PC-9 (cell line): ENCODE measurements at regions of chr18 and their contacts with region 1.

Region 1: DNA sequence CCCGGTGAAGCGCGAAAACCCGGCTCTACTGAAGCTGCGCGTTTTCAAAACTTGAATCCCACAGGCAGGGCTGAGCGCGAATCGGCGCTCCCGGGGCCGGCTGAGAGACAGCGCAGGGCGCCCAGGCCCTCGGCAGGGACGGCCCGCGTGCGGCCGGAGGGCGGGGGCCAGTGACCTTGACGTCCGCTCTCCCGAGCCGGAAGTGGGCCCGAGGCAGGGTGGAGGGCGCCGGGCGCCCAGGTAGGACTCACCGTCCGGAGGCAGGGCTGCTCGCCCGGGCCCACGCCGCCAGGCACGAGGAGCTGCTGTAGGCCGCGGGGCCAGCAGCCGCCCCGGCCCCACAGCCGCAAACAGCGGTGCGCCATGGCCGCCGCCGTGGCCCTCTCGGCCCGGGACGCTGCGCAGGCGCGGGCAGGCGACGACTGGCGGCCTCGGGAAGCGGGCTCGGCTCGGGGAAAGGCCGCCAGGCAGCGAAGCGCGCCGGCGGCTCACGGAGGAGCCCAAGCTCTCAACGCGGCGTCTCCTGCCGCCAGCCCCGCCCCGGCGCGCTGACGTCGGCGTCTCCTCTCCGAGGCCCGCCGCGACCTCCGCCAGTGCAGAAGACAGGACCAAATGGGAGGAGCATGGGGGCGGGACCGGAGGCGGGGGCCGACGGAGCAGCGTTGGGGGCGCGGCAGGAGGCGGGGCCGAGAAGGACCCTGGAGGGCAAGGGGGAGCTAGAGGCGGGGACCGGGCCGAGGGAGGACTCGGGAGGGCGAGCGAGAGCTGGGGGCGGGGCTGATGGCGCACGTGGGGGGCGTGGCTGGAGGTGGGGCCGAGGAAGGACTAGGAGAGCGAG is at the start of gene AFG3L2:
- DNase-seq: peak; percentile 92 to 100
- H3K4me3 ChIP-seq: peak within 1 kb of the TSS; percentile 86
- H3K27ac ChIP-seq: peak within 1 kb of the TSS; percentile 87
- H3K4me1 ChIP-seq: peaks cover 33% of the 10 kb centered on the region
- H3K27me3 ChIP-seq: no peaks in the 10 kb centered on the region
- CTCF ChIP-seq: no peak
- total RNA-seq, gene AFG3L2: 69.4 and 71.1 TPM in 2 replicates

Region 2: GRCh38 chr18:11947214-11948191 is 429.4 kb before region 1 on chr18:
- CTCF ChIA-PET with region 1: no interaction called
- POLR2A ChIA-PET with region 1: no interaction called
- intact Hi-C with region 1: loop called (anchors 1 kb)
- DNase-seq: peak; percentile 96 to 97
- H3K4me3 ChIP-seq: peak overlapping the region; percentile 88
- H3K27ac ChIP-seq: peak overlapping the region; percentile 99
- H3K4me1 ChIP-seq: peaks cover 34% of the 10 kb centered on the region
- H3K27me3 ChIP-seq: no peaks in the 10 kb centered on the region
- CTCF ChIP-seq: no peak

Region 3: DNA sequence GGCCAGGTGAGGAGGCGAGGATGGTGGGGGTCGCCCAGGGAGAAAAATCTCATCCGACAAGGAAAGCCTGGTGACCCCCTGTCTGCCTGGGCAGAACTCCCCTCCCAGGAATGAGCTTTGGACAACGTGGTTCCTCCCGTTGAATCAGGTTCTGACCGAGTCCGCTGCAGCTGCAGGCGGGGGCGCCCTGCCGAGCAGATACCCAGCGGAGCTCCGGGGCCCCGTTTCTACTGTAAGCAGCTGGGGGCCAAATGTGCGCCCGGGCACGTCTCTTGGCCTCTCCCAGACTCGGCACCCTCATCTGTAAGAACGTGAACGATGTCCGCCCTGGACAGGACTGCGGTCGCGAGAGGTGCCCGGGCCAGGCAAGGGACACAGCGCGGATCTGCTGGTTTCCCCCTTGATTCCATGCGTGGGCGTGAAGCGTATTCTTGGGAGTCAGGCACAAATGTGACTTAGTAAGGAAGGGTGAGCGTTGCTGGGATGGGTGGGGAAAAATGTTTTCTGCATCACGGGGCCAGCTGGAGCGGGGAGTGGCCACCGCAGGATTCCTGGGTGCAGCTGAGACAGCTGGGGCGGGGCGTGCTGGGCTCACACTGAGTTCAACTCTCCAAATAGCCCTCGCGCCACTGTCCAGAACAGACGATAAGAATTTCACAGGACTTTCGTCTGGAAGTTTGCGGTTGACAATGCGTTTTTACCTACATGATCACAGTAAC is 89.1 kb before region 1 on chr18:
- CTCF ChIA-PET with region 1: no interaction called
- POLR2A ChIA-PET with region 1: interaction called, 10 read pairs
- intact Hi-C with region 1: loop called (anchors 1 kb)
- DNase-seq: peak; percentile 76 to 91
- H3K4me3 ChIP-seq: peak overlapping the region; percentile 56
- H3K27ac ChIP-seq: peak overlapping the region; percentile 33; the same call in 1 of the 2 replicates
- H3K4me1 ChIP-seq: peaks cover 6% of the 10 kb centered on the region; the same call in 1 of the 2 replicates
- H3K27me3 ChIP-seq: no peaks in the 10 kb centered on the region
- CTCF ChIP-seq: no peak

Region 4: DNA sequence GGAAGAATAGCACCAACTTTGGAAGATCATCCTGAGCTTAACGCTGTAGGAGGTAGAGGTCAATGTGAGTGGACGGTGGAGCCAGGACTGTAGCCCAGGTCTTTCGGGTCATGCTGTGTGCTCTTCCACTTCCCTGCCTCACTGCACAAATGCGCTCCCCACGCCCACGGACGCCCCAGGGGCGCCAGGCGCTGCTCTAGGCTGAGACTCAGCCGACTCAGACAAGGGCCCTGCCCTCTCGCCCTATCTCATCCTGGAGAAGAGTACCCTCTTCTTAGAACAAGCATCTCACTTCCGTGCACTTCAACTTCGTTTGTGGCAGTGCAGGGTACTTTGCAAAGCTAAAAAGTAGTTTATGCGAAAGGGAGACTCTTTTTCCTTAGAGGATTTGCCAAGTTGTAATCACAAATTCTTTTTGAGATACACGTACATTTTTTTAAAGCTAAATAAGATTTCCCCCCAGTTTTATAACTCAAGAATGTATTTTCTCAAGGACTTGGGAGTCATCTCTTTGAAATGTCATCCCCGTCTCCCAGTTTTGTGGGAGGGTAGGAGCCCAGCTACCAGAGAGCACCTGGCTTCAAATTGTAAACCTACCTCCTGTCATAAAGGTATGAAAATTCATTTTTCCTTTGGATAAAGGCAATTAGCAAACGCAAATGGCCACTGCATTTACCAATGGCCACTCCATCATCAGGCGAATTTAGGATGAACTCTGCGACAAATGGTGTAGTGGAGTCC is 29.6 kb after region 1 on chr18:
- CTCF ChIA-PET with region 1: no interaction called
- POLR2A ChIA-PET with region 1: no interaction called
- intact Hi-C with region 1: loop called (anchors 2 kb)
- DNase-seq: no peak
- H3K4me3 ChIP-seq: no peak overlapping the region
- H3K27ac ChIP-seq: no peak overlapping the region
- H3K4me1 ChIP-seq: peaks cover 46% of the 10 kb centered on the region
- H3K27me3 ChIP-seq: no peaks in the 10 kb centered on the region
- CTCF ChIP-seq: no peak

Region 5: GRCh38 chr18:12947355-12948041 is 570.6 kb after region 1 on chr18 and contains the start of gene SEH1L:
- CTCF ChIA-PET with region 1: no interaction called
- POLR2A ChIA-PET with region 1: interaction called, 20 read pairs
- intact Hi-C with region 1: loop called (anchors 1 kb)
- DNase-seq: peak; percentile 81 to 98
- H3K4me3 ChIP-seq: peak within 1 kb of the TSS; percentile 98
- H3K27ac ChIP-seq: peak within 1 kb of the TSS; percentile 95
- H3K4me1 ChIP-seq: peaks cover 32% of the 10 kb centered on the region
- H3K27me3 ChIP-seq: no peaks in the 10 kb centered on the region
- CTCF ChIP-seq: no peak
- total RNA-seq, gene SEH1L: 98.3 and 101 TPM in 2 replicates